ENCODE measurements at regions of chr12 and their contacts with region 1.

Region 1: DNA sequence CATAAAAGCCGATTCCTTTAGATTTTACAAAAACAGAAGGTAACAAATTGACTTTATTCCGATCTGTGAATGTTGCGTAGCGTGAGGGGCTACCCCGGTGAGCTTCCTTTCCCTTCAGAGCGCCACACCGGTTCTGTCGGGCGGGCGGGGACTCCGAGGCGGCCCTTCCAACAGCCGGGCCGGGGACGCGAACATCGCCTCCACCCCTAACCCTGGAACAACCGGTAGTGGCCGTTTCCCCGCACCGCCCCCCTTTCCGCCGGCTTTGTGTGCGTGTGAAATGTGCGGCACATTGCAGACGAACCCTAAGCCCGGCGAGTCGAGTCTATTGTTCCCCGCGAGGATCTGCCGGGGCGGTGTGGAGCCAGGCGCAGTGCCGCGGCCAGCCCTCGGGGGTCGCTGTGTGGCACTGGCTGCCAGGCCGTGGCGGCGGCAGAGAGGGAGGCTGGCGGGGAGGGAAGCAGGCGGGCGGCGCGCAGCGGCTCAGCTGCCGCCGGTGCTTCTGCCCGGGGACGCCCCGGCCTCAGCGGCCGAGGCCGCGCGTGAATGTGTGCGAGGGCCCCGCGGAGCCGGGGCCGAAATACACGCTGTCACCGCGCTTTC is 775 bp upstream of the ARID2 start:
- DNase-seq: peak; percentile 98
- ATAC-seq: peak; percentile 69
- H3K4me3 Mint-ChIP-seq: peak overlapping the region; percentile 100
- H3K27ac Mint-ChIP-seq: peak overlapping the region; percentile 99
- H3K4me1 Mint-ChIP-seq: peaks cover 20% of the 10 kb centered on the region
- H3K27me3 Mint-ChIP-seq: no peaks in the 10 kb centered on the region

Region 2: DNA sequence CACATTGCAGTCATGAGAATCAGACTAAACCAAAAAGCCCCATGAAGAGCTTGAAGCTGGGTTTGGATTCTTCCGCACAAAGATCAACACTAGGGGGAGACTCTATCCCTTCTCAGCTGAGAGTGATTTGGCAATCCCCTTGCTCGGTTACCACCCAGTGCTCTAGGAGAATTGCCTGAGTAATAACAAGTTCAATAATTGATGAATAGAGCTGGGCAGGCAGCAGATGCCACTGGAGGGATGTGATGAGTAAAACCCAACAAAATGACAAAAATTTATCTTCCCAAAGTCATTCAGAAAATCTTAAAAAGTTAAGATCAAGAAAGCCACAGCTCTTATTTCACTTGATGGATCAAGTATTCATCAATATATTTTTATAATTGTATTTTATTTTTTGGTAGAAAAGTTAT is 184.8 kb before region 1 on chr12:
- CTCF ChIA-PET with region 1: interaction called, 195 read pairs
- POLR2A ChIA-PET with region 1: interaction called, 21 read pairs
- DNase-seq: peak; percentile 78
- ATAC-seq: peak; percentile 97
- H3K4me3 Mint-ChIP-seq: no peak overlapping the region
- H3K27ac Mint-ChIP-seq: no peak overlapping the region
- H3K4me1 Mint-ChIP-seq: peaks cover 5% of the 10 kb centered on the region
- H3K27me3 Mint-ChIP-seq: peaks cover 13% of the 10 kb centered on the region

Region 3: DNA sequence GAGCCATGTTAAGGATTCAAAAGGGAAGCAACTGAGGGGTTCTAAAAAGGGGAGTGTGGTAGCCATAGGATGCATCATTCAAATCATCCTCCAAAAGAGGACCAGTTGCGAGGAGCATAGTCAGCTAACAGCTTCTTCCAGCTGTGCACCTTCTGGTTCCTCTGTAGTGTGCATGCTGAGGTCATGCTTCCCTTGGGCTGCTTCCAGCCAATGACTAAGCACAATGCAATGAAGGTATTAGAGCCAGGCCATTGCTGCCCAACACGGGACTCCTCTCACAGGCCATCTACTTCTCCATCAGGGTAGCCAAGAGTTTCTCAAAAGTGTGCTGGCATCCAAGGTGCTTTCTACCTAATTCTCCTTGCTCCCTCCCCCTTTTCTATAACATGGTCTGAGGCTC is 68.4 kb before region 1 on chr12:
- CTCF ChIA-PET with region 1: interaction called, 67 read pairs
- POLR2A ChIA-PET with region 1: interaction called, 40 read pairs
- DNase-seq: no peak
- ATAC-seq: no peak
- H3K4me3 Mint-ChIP-seq: no peak overlapping the region
- H3K27ac Mint-ChIP-seq: no peak overlapping the region
- H3K4me1 Mint-ChIP-seq: peaks cover 37% of the 10 kb centered on the region
- H3K27me3 Mint-ChIP-seq: no peaks in the 10 kb centered on the region

Region 4: GRCh38 chr12:45685680-45686079 is 43.1 kb before region 1 on chr12:
- CTCF ChIA-PET with region 1: interaction called, 14 read pairs
- POLR2A ChIA-PET with region 1: interaction called, 4 read pairs
- DNase-seq: no peak
- ATAC-seq: no peak
- H3K4me3 Mint-ChIP-seq: no peak overlapping the region
- H3K27ac Mint-ChIP-seq: no peak overlapping the region
- H3K4me1 Mint-ChIP-seq: peaks cover 26% of the 10 kb centered on the region
- H3K27me3 Mint-ChIP-seq: peaks cover 5% of the 10 kb centered on the region

Region 5: GRCh38 chr12:45990468-45991283 is 261.9 kb after region 1 on chr12 and contains the start of gene SCAF11:
- CTCF ChIA-PET with region 1: interaction called, 4 read pairs
- POLR2A ChIA-PET with region 1: interaction called, 57 read pairs
- DNase-seq: peak; percentile 100
- ATAC-seq: peak; percentile 83
- H3K4me3 Mint-ChIP-seq: peak within 1 kb of the TSS; percentile 95
- H3K27ac Mint-ChIP-seq: peak within 1 kb of the TSS; percentile 99
- H3K4me1 Mint-ChIP-seq: peaks cover 46% of the 10 kb centered on the region
- H3K27me3 Mint-ChIP-seq: peaks cover 5% of the 10 kb centered on the region
- total RNA-seq, gene SCAF11: 131 to 134 TPM

Measured in activated CD8-positive, alpha-beta T cell treated with anti-CD3 and anti-CD28 coated beads, Interleukin-2, amount 10 ng/mL, durations not matched to agents 7 days and 5 days (primary cell).